Breast epithelium (tissue), 4 donors: ENCODE measurements at regions of chr4 and their contacts with region 1.

Region 1: DNA sequence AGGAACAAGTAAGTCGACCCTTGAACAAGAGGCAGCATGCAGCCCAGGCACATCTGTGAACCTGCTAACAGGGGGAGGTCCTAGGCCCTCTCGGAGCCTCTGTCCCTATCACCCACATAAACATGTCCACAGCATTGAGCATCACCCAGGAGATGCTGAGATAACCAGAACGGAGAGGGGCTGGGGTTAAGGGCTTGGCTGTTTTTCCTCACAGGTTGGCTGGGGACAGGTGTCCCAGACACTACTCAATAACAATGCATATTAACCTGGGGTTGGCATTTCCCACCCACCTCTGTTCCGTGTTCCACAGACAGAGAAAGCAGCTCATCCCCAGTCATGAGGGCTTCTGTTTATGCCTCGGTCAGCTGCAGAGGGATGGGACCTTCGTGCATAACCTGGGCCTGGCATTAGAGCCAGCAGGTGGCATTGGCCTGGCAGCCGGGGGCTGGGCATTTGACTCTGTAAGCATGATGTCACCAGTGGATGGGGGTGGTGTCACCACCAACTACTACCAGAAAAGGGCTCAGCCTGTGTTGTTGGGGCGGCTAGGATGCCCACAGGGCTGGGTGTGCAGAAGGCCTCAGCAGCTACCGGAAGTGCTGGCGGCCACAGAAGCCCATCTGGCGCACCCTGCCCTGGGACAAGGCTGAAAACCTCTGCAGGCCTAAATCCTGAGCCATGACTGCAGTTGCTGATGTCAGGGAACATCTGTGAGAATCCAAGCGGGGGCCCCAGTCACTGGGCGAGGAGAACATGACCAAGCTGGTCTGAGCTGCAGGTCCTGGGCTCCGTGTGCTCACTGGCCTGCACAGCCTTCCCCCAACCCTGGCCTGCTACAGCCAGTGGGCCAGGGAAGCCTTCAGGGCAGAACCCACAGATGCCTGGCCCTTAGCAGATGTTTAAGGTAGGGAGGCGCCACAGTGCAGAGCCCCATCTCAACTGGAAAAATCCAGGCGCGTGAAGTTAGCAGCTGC is 351.4 kb downstream of the NR3C2 start:
- DNase-seq: no peak
- H3K4me3 ChIP-seq: no peak overlapping the region
- H3K27ac ChIP-seq: no peak overlapping the region
- H3K4me1 ChIP-seq: no peaks in the 10 kb centered on the region
- H3K27me3 ChIP-seq: no peaks in the 10 kb centered on the region
- CTCF ChIP-seq: no peak
- POLR2A ChIP-seq: no peak

Region 2: DNA sequence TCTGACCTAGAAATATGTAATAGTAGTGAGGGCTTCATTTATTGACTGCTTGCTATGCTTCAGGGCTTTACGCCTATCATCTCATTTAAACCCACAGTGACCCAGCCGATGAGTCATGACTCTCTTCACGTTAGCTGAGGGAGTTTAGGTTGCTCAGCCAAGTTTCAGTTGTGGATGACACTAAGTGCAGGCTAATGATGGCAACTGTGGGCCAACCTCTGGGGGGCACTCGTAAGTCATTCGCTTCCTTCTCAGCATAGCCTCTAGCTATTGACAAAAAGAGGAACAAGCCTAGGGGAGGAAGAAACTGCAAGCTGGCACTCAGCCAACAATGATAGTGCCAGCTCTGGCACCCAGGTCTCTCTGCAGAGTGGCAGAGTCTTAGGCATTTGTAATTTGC is 33.9 kb before region 1 on chr4:
- intact Hi-C with region 1: no loop called
- DNase-seq: peak in 1 of 2 donors; percentile 23
- H3K4me3 ChIP-seq: no peak overlapping the region
- H3K27ac ChIP-seq: no peak overlapping the region
- H3K4me1 ChIP-seq: no peaks in the 10 kb centered on the region
- H3K27me3 ChIP-seq: no peaks in the 10 kb centered on the region
- CTCF ChIP-seq: no peak
- POLR2A ChIP-seq: no peak

Region 3: DNA sequence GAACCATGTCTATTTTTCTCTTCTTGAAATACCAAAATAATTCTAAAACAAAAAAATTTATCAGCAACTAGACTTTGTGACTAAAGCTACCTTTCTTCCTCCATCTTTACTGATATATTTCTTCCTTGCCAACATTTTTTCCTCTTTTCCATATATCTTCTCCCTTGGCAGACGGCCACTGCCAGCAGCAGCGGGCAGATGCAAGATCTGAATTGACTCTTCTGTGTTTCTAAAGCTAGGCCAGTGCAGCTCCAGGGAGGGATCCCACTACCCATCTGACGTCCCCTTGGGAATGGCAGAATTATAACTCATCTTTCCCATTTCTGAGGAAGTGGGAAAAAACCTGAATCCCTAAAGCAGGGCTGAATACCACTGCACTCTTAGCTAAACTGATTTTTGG is 145.0 kb after region 1 on chr4:
- intact Hi-C with region 1: no loop called
- DNase-seq: no peak
- H3K4me3 ChIP-seq: no peak overlapping the region
- H3K27ac ChIP-seq: no peak overlapping the region
- H3K4me1 ChIP-seq: peaks cover 0 to 6% of the 10 kb centered on the region in 2 donors
- H3K27me3 ChIP-seq: no peaks in the 10 kb centered on the region
- CTCF ChIP-seq: no peak
- POLR2A ChIP-seq: no peak

Region 4: DNA sequence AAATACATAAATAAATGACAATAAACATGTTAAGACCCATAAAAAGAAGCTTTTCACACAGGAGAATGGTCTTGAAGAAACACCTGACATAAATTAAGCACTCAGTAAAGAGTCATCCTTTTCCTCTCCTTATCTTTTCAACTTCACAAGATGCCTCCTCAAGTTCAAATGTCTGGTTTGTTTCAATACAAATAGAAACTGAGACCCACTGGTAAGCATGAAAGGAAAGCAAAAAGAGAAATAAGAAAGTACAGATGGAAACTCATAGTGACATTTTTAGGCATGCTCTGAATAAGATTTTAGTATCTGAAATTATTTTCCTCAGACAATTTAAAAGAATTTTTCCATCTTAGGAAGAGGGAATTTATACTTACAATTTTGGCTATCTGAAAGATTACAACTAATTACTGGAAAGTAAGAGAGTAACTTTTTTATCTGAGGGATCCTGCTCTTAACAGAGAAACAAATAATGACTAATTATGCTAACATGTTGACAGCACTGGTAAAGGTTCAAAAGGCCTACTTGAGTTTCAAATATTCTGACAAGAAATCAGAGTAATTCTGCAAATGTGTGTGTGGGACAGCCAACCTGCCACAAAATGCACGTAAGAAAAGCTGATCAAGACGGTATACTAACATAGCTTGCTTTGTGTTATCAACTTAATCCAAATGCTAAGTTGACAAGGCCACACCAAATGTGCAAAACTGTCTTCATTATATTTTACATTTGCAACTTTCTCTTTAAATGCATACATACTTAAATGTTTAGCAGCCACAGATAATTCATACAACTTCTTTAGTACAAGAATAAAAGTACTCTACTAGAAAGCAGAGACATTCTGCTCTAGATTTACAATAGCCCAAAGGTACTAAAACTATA is 1611.9 kb after region 1 on chr4:
- intact Hi-C with region 1: loop called (anchors 5 kb)
- DNase-seq: no peak
- H3K4me3 ChIP-seq: no peak overlapping the region
- H3K27ac ChIP-seq: no peak overlapping the region
- H3K4me1 ChIP-seq: no peaks in the 10 kb centered on the region
- H3K27me3 ChIP-seq: no peaks in the 10 kb centered on the region
- CTCF ChIP-seq: no peak
- POLR2A ChIP-seq: no peak